ENCODE measurements at regions of chr11 and their contacts with region 1.

Region 1: GRCh38 chr11:65497141-65498041 is 1.5 kb upstream of the MALAT1 start:
- DNase-seq: peak; percentile 91 to 100
- H3K4me3 ChIP-seq: peak overlapping the region; percentile 99
- H3K27ac ChIP-seq: peak overlapping the region; percentile 97
- H3K4me1 ChIP-seq: peaks cover 39% of the 10 kb centered on the region
- H3K27me3 ChIP-seq: no peaks in the 10 kb centered on the region
- CTCF ChIP-seq: peak; percentile 13; the same call in 1 of the 2 replicates

Region 2: DNA sequence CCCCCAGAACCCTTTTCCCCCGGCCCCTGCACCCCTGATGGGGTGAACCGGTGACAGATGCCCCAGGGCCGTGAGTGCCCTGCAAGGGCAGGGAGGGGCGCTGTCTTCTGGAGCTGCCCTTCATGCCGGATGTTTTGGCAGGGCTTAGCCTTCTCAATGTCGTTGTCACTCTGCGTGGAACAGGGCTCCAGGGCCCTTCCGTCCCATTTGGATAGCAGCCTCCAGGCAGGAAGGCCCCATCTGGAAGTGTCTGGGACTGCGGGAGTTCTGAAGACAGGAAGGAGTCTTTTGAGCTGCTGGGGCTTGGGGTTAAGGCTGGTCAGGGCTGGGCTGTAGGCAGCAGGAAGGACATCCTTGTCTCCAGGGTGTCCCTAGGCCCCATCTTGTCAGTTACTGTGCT is 106.4 kb before region 1 on chr11:
- CTCF ChIA-PET with region 1: no interaction called
- POLR2A ChIA-PET with region 1: interaction called, 10 read pairs
- intact Hi-C with region 1: no loop called
- DNase-seq: no peak
- H3K4me3 ChIP-seq: no peak overlapping the region
- H3K27ac ChIP-seq: no peak overlapping the region
- H3K4me1 ChIP-seq: peaks cover 14% of the 10 kb centered on the region
- H3K27me3 ChIP-seq: no peaks in the 10 kb centered on the region
- CTCF ChIP-seq: no peak

Region 3: DNA sequence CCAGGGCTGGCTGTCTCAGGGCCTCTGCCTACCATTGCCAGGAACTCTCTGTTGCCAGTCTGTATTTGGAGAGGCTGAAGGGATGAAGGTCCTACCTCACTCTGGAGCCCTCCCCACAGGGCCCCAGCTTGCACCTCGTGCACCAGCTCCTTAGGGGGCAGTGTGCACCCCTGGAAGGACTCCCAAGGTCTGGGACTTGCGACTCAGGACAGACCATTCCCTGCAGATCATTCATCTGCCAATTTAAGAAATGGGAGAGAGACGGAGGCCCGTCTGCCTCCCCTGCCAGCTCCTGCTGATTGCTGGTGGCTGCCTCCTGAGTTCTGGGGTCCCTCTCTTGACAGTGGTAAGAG is 26.0 kb before region 1 on chr11:
- CTCF ChIA-PET with region 1: interaction called, 18 read pairs
- POLR2A ChIA-PET with region 1: interaction called, 34 read pairs
- intact Hi-C with region 1: loop called (anchors 1 kb)
- DNase-seq: peak; percentile 61 to 78
- H3K4me3 ChIP-seq: no peak overlapping the region
- H3K27ac ChIP-seq: peak overlapping the region; percentile 95
- H3K4me1 ChIP-seq: peaks cover 66% of the 10 kb centered on the region
- H3K27me3 ChIP-seq: no peaks in the 10 kb centered on the region
- CTCF ChIP-seq: peak; percentile 61

Region 4: GRCh38 chr11:65540297-65541092 is 43.1 kb after region 1 on chr11:
- CTCF ChIA-PET with region 1: no interaction called
- POLR2A ChIA-PET with region 1: interaction called, 14 read pairs
- intact Hi-C with region 1: no loop called
- DNase-seq: peak; percentile 66 to 90
- H3K4me3 ChIP-seq: peak overlapping the region; percentile 46; the same call in 1 of the 2 replicates
- H3K27ac ChIP-seq: no peak overlapping the region
- H3K4me1 ChIP-seq: peaks cover 17% of the 10 kb centered on the region
- H3K27me3 ChIP-seq: no peaks in the 10 kb centered on the region
- CTCF ChIP-seq: peak; percentile 95

Region 5: GRCh38 chr11:67027483-67028196 is 1530.2 kb after region 1 on chr11:
- CTCF ChIA-PET with region 1: interaction called, 13 read pairs
- POLR2A ChIA-PET with region 1: no interaction called
- intact Hi-C with region 1: no loop called
- DNase-seq: peak in 1 of 2 experiments; percentile 50
- H3K4me3 ChIP-seq: no peak overlapping the region
- H3K27ac ChIP-seq: no peak overlapping the region
- H3K4me1 ChIP-seq: peaks cover 66% of the 10 kb centered on the region
- H3K27me3 ChIP-seq: no peaks in the 10 kb centered on the region
- CTCF ChIP-seq: no peak